ENCODE measurements at regions of chr2 and their contacts with region 1.

Region 1: GRCh38 chr2:16727256-16727655 is 61.6 kb upstream of the CYRIA start:
- DNase-seq: no peak
- H3K4me3 ChIP-seq: no peak overlapping the region
- H3K27ac ChIP-seq: peak overlapping the region in 1 of 2 donors; percentile 3
- H3K4me1 ChIP-seq: peaks cover 0 to 3% of the 10 kb centered on the region in 2 donors
- H3K27me3 ChIP-seq: no peaks in the 10 kb centered on the region
- CTCF ChIP-seq: peak in 1 of 3 experiments; percentile 21

Region 2: DNA sequence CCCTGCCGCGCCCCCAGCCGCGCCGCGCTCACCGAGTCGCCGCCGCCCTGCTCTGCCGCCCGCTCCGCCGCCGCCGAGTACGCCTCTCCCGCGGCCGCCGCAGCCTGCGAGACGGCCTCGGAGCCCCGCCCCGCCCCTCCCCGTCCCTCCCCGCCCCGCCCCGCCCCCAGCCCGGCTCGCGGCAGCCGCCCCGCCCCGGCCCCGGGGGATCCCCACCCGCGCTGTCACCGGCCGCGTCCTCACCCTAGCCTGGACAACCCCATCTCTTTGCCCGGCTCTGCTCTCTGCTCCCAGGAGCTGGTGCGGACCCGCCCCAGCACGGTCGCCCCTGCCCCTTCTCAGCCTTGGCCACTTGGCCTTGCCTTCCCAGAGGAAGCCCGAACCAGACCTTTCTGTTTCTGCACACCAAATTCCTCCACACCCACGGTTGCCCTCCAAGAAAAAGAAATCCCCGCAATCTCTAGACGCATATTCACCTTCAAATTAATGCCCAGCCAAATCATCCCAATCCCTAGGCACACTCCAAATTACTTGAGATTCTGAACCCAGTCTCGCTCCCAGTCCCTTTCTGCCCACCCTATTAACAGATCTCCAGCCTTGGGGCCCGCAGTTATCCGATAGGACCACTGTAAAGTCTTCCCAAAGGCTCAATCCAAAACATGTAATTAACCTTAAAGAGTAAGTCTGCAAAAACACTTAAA is 61.4 kb before region 1 on chr2 and contains the start of gene CYRIA:
- intact Hi-C with region 1: loop called (anchors 2 kb)
- DNase-seq: peak in 1 of 2 donors; percentile 79
- H3K4me3 ChIP-seq: peak within 1 kb of the TSS; percentile 66 to 67
- H3K27ac ChIP-seq: peak within 1 kb of the TSS; percentile 58 to 66
- H3K4me1 ChIP-seq: peaks cover 0 to 12% of the 10 kb centered on the region in 2 donors
- H3K27me3 ChIP-seq: no peaks in the 10 kb centered on the region
- CTCF ChIP-seq: no peak
- total RNA-seq, gene CYRIA: 7.1 TPM

Region 3: DNA sequence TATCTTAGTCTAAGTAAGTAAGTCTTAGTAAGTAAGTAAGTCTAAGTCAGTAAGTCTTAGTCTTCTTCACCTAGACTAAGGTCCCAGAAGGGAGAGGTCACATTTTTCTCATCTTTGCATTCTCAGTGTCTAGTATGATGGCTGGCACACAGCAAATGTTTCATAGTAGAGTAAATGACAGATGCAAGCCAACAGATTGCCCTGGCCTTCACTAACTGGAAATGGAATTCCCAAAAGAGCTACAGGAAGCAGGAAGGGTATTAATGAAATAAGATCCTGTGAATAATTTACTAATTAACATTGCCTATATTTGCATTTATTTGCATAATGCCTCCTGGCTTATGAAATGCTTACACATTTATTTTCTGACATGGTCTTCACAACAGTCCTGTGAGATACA is 569.4 kb after region 1 on chr2:
- intact Hi-C with region 1: no loop called
- DNase-seq: no peak
- H3K4me3 ChIP-seq: no peak overlapping the region
- H3K27ac ChIP-seq: no peak overlapping the region
- H3K4me1 ChIP-seq: no peaks in the 10 kb centered on the region
- H3K27me3 ChIP-seq: no peaks in the 10 kb centered on the region
- CTCF ChIP-seq: no peak